AG04450 (cell line): ENCODE measurements at regions of chr1 and their contacts with region 1.

Region 1: GRCh38 chr1:71196685-71197084 is 115.8 kb upstream of the ZRANB2 start:
- DNase-seq: peak; percentile 2
- H3K4me3 ChIP-seq: no peak overlapping the region
- H3K27ac ChIP-seq: no peak overlapping the region
- H3K27me3 ChIP-seq: no peaks in the 10 kb centered on the region
- CTCF ChIP-seq: peak; percentile 56

Region 2: GRCh38 chr1:71157151-71157550 is 39.5 kb before region 1 on chr1:
- CTCF ChIA-PET with region 1: no interaction called
- POLR2A ChIA-PET with region 1: no interaction called
- DNase-seq: no peak
- H3K4me3 ChIP-seq: no peak overlapping the region
- H3K27ac ChIP-seq: no peak overlapping the region
- H3K27me3 ChIP-seq: no peaks in the 10 kb centered on the region
- CTCF ChIP-seq: no peak

Region 3: GRCh38 chr1:71521655-71522264 is 325.1 kb after region 1 on chr1:
- CTCF ChIA-PET with region 1: interaction called, 30 read pairs
- POLR2A ChIA-PET with region 1: no interaction called
- DNase-seq: peak; percentile 11
- H3K4me3 ChIP-seq: no peak overlapping the region
- H3K27ac ChIP-seq: no peak overlapping the region
- H3K27me3 ChIP-seq: no peaks in the 10 kb centered on the region
- CTCF ChIP-seq: peak; percentile 84